ENCODE measurements at regions of chr9 and their contacts with region 1.

Region 1: DNA sequence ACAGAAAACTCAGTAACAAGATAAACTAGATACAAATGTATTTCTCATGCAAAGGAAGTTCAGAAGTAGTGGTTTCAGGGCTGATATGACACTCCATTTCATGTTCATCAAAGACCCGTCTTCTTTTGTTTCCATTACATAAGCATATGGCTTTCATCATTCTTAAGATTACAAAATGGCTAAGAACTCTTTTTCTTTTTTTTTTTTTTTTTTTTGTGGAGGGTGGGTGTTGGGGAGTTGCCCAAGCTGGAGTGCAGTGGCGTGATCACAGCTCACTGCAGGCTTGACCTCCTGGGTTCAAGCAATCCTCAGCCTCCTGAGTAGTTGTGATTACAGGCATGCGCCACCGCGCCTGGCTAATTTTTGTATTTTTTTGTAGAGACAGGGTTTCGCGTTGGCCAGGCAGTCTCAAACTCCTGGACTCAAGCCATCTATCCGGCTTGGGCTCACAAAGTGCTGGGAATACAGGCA is 22.0 kb upstream of the PTBP3 start:
- DNase-seq: no peak
- H3K4me3 ChIP-seq: no peak overlapping the region
- H3K27ac ChIP-seq: no peak overlapping the region
- H3K4me1 ChIP-seq: no peaks in the 10 kb centered on the region
- H3K27me3 ChIP-seq: no peaks in the 10 kb centered on the region
- CTCF ChIP-seq: no peak
- EP300 ChIP-seq: no peak
- POLR2A ChIP-seq: no peak

Region 2: DNA sequence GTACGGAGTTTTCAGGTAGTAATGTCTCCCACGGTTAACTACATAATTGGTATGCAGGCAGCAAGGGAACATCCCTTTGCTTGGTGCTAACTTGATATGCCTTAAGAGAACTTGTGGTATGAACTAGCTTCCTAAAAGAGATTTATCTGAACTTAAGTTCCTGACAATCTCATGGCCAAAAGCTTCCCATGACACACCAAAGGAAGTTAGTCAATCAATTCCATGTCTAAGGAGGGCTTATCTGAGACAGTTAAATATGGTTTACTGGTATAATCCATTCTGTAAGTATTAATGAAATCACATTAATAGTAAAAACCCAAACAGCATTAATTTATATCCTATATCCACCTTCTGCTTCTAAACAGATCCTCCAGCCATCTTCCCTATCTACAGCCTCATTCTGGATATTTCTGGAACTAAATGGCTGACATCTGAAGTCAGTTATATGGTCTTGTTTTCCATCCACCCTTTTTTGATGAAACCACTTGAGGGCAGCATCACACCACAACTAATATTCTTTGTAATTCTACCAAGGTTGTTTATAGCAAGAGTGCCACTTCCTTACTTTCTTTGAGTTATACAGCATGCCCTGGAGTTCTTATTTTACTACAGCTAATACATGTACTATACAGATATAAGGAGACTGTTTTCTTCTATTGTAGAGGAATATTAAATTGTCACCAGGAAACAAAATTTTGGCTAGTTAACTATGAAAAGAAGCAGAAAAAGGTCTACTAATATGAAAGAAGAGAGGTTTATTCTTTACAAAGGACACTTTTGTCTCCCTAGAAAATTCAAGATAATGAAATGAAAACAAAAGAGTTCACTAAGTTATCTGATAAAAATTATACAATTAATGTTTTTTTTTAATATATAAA is 595.5 kb before region 1 on chr9:
- in situ Hi-C with region 1: loop called in 3 of 4 experiments (anchors 10 to 25 kb)
- intact Hi-C with region 1: no loop called
- DNase-seq: peak; percentile 49
- H3K4me3 ChIP-seq: no peak overlapping the region
- H3K27ac ChIP-seq: no peak overlapping the region
- H3K4me1 ChIP-seq: peaks cover 3 to 7% (median 4%) of the 10 kb centered on the region in 4 donors
- H3K27me3 ChIP-seq: no peaks in the 10 kb centered on the region
- CTCF ChIP-seq: peak; percentile 59 to 81 (median 69)
- EP300 ChIP-seq: no peak
- POLR2A ChIP-seq: no peak

Region 3: DNA sequence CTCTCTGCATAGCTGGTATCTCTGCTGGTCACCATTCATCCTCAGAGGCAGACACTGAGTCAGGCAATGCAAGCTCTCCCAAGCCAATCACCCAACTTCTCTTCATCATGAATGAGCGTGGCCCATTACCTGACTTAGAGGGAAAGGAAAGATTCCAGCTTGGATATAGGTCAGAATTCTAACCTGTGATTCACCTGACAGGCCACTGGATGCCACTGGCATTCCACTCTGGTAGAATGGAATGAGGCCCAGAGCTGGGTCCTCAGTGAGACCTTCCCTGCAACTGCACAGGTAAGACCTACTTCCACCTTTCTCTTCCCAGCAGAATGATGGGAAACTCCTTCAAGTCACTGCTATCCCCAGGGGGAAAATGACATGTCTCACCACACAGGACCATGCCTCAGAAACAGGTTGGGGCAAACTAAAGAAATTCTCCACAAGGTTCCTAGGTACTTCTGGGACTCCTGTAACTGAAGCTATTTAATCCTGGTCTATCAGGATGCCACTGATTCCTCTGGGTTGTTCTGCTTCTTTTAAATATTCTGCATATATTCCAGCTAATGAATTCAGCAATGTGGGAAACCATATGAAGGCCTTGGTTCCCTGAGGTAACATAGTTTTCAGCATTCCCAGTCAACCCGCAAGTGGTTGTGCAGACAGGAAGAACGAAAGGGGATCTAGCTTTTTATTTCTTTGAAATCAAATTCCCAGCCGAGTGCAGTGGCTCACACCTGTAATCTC is 242.4 kb before region 1 on chr9:
- in situ Hi-C with region 1: loop called in 1 of 4 experiments (anchors 5 kb)
- intact Hi-C with region 1: no loop called
- DNase-seq: peak; percentile 49
- H3K4me3 ChIP-seq: no peak overlapping the region
- H3K27ac ChIP-seq: no peak overlapping the region
- H3K4me1 ChIP-seq: peaks cover 0 to 7% (median 3%) of the 10 kb centered on the region in 4 donors
- H3K27me3 ChIP-seq: no peaks in the 10 kb centered on the region
- CTCF ChIP-seq: peak; percentile 37 to 71 (median 51)
- EP300 ChIP-seq: no peak
- POLR2A ChIP-seq: no peak

Region 4: GRCh38 chr9:112486221-112487007 is 131.0 kb after region 1 on chr9 and contains the start of gene KIAA1958:
- in situ Hi-C with region 1: no loop called
- intact Hi-C with region 1: no loop called
- DNase-seq: peak; percentile 89
- H3K4me3 ChIP-seq: peak within 1 kb of the TSS; percentile 89 to 99 (median 96)
- H3K27ac ChIP-seq: peak within 1 kb of the TSS; percentile 84 to 91 (median 88)
- H3K4me1 ChIP-seq: peaks cover 0 to 9% (median 3%) of the 10 kb centered on the region in 4 donors
- H3K27me3 ChIP-seq: no peaks in the 10 kb centered on the region
- CTCF ChIP-seq: peak in 1 of 5 experiments; percentile 1
- EP300 ChIP-seq: no peak
- POLR2A ChIP-seq: peak; percentile 61
- total RNA-seq, gene KIAA1958: 5.0 to 12.4 (median 9.4) TPM